Psoas muscle (tissue), 8 donors: ENCODE measurements at regions of chr20 and their contacts with region 1.

Region 1: DNA sequence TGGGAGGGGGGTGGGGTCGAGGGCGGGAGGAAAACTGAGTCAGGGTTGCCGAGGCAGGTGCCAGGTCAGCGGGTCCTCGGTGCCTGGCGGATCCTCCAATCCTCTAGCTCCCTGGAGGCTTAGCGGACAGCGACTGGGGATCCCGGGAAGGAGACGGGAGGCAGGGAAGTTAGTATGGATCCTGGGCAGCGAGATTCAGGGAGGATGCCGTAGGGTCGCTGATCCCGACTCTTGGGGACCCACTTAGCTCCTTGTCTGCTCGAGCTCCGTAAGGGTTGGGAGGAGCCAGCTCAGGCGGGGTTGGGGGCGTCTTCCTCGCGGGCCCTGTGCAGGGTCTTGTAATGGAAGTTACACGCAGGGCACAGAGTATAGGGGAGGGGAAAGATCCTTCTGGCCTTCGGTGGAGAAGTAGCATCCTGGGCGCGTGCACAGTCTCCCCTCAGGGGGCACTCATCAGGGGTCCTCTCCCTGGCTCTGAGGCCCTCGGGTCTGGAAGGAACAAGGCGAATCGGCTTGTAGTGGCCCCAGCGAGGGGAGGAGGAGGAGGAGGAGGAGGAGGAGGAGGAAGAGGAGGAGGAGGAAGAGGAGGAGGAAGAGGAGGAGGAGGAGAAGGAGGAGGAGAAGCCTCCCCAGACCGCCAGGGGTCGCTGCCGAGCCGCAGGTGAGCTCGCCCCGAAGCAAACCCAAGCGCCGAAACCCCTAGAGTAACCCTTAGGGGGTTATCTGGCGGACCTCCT is 6.4 kb upstream of the SLC12A5 start:
- DNase-seq: peak; percentile 56 to 80
- ATAC-seq: peak; percentile 64 to 86 (median 68)
- H3K4me3 ChIP-seq: no peak overlapping the region
- H3K27ac ChIP-seq: no peak overlapping the region
- H3K4me1 ChIP-seq: no peaks in the 10 kb centered on the region
- H3K27me3 ChIP-seq: peaks cover 0 to 82% (median 30%) of the 10 kb centered on the region in 3 donors
- CTCF ChIP-seq: peak; percentile 61

Region 2: GRCh38 chr20:45538209-45538799 is 484.3 kb before region 1 on chr20:
- intact Hi-C with region 1: no loop called
- DNase-seq: no peak
- ATAC-seq: no peak
- H3K4me3 ChIP-seq: no peak overlapping the region
- H3K27ac ChIP-seq: no peak overlapping the region
- H3K4me1 ChIP-seq: no peaks in the 10 kb centered on the region
- H3K27me3 ChIP-seq: peaks cover 1 to 22% (median 2%) of the 10 kb centered on the region in 3 donors
- CTCF ChIP-seq: no peak

Region 3: GRCh38 chr20:46089417-46090388 is 67.1 kb after region 1 on chr20 and contains the start of gene NCOA5:
- intact Hi-C with region 1: loop called (anchors 2 kb)
- DNase-seq: peak; percentile 97 to 98
- ATAC-seq: peak; percentile 94 to 98 (median 96)
- H3K4me3 ChIP-seq: peak within 1 kb of the TSS; percentile 92
- H3K27ac ChIP-seq: peak within 1 kb of the TSS; percentile 100
- H3K4me1 ChIP-seq: peaks cover 51% of the 10 kb centered on the region
- H3K27me3 ChIP-seq: no peaks in the 10 kb centered on the region
- CTCF ChIP-seq: peak; percentile 28
- total RNA-seq, gene NCOA5: 11.2 to 17.3 (median 12.4) TPM

Region 4: GRCh38 chr20:46151936-46152335 is 129.4 kb after region 1 on chr20:
- intact Hi-C with region 1: loop called in 1 of 2 experiments (anchors 10 kb)
- DNase-seq: no peak
- ATAC-seq: no peak
- H3K4me3 ChIP-seq: no peak overlapping the region
- H3K27ac ChIP-seq: no peak overlapping the region
- H3K4me1 ChIP-seq: no peaks in the 10 kb centered on the region
- H3K27me3 ChIP-seq: peaks cover 0 to 23% (median 3%) of the 10 kb centered on the region in 3 donors
- CTCF ChIP-seq: peak; percentile 18

Region 5: DNA sequence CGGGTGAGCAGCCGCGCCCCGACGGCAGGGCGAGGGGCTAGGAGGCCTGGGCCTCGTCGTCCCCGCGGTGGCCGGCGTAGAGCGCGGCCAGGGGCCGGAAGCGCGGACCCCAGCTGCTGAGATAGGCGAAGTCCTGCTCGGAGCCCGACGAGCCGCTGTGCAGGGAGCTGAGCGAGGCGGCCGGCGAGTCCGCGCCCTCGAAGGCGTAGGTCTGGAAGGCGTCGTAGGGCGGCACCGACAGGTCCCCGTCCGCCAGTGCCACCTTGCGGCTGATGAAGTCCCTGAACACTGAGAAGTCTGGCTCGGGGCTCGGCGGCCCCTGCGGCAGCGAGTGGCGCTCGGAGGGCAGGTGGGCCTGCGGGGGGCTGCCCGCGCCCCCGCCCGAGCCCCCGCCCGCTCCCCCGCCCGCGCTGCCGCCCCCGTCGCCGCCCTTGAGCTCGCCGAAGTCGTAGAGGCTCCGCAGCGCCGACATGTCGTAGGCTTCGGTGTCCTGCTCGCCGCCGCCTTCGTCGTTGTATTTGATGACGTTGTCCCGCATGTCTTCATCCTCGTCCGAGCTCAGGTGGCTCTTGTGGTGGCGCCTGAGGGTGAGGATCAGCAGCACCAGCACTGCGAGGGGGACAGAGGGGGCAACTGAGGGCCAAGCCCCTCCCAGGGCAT is 152.0 kb after region 1 on chr20:
- intact Hi-C with region 1: loop called in 1 of 2 experiments (anchors 2 kb)
- DNase-seq: peak; percentile 76 to 84
- ATAC-seq: peak; percentile 70 to 88 (median 82)
- H3K4me3 ChIP-seq: no peak overlapping the region
- H3K27ac ChIP-seq: no peak overlapping the region
- H3K4me1 ChIP-seq: no peaks in the 10 kb centered on the region
- H3K27me3 ChIP-seq: peaks cover 4 to 53% (median 14%) of the 10 kb centered on the region in 3 donors
- CTCF ChIP-seq: peak; percentile 72

Region 6: GRCh38 chr20:46349035-46349741 is 326.6 kb after region 1 on chr20:
- intact Hi-C with region 1: loop called in 1 of 2 experiments (anchors 5 kb)
- DNase-seq: peak; percentile 66 to 79
- ATAC-seq: peak; percentile 62 to 85 (median 80)
- H3K4me3 ChIP-seq: no peak overlapping the region
- H3K27ac ChIP-seq: no peak overlapping the region
- H3K4me1 ChIP-seq: no peaks in the 10 kb centered on the region
- H3K27me3 ChIP-seq: no peaks in the 10 kb centered on the region
- CTCF ChIP-seq: peak; percentile 85